Ovary (tissue), 10 donors: ENCODE measurements at regions of chr22 and their contacts with region 1.

Region 1: GRCh38 chr22:21712894-21713712 is 22.5 kb downstream of the YPEL1 start:
- DNase-seq: peak; percentile 65 to 71 (median 71)
- H3K4me3 ChIP-seq: no peak overlapping the region
- H3K27ac ChIP-seq: no peak overlapping the region
- H3K4me1 ChIP-seq: peaks cover 3% of the 10 kb centered on the region
- H3K27me3 ChIP-seq: no peaks in the 10 kb centered on the region
- CTCF ChIP-seq: peak; percentile 56 to 83 (median 77)
- EP300 ChIP-seq: no peak
- POLR2A ChIP-seq: no peak

Region 2: DNA sequence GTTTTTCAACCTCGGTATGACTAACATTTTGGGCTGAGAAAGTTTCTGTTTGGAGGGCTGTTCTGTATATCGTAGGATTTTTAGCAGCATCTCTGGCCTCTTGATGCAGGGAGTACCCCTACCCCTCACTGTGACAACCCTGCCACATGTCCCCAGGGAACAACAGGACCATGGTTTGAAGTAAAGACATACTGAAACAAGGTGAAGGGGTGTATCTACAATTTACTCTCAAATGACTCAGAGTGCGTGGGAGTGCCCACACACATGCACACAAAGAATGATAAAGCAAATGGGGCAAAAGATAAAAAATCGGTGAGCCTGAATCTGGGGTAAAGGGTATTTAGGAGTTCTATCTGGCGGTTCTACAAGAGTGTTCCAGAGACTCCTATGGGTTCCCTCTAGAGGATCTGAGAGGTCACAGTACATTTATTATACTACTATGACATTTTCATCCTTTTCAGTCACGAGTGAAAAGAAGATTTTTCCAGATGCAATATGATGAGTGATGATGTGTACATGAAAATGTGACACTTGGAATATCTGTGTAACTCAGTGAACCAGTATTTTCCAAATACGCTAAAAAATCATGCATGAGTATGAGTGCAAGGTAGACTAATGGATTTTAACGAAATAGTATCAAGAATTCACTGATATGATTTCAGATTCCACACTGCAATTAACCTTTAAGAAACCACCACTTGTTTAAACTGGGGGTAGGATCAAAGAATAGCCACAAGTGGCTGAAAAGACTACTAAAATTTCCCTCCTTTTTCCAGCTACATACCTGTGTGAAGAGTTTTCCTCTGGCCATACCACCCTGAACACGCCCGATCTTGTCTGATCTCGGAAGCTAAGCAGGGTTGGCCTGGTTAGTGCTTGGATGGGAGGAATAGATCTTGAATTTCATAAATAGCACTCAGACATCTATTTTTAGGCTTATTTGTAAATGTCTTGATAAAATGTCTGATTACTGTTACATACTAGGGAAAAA is 78.8 kb after region 1 on chr22:
- intact Hi-C with region 1: loop called in 1 of 4 experiments (anchors 10 kb)
- DNase-seq: no peak
- H3K4me3 ChIP-seq: no peak overlapping the region
- H3K27ac ChIP-seq: no peak overlapping the region
- H3K4me1 ChIP-seq: no peaks in the 10 kb centered on the region
- H3K27me3 ChIP-seq: no peaks in the 10 kb centered on the region
- CTCF ChIP-seq: no peak
- EP300 ChIP-seq: no peak
- POLR2A ChIP-seq: no peak

Region 3: GRCh38 chr22:21832291-21833290 is 119.5 kb after region 1 on chr22:
- intact Hi-C with region 1: no loop called
- DNase-seq: no peak
- H3K4me3 ChIP-seq: no peak overlapping the region
- H3K27ac ChIP-seq: no peak overlapping the region
- H3K4me1 ChIP-seq: peaks cover 12% of the 10 kb centered on the region
- H3K27me3 ChIP-seq: no peaks in the 10 kb centered on the region
- CTCF ChIP-seq: no peak
- EP300 ChIP-seq: no peak
- POLR2A ChIP-seq: no peak

Region 4: GRCh38 chr22:21938071-21938822 is 225.1 kb after region 1 on chr22:
- intact Hi-C with region 1: loop called (anchors 2 to 5 kb)
- DNase-seq: peak; percentile 92 to 98 (median 95)
- H3K4me3 ChIP-seq: peak overlapping the region; percentile 79
- H3K27ac ChIP-seq: peak overlapping the region; percentile 91 to 92
- H3K4me1 ChIP-seq: peaks cover 21% of the 10 kb centered on the region
- H3K27me3 ChIP-seq: no peaks in the 10 kb centered on the region
- CTCF ChIP-seq: peak; percentile 99 to 100 (median 99)
- EP300 ChIP-seq: no peak
- POLR2A ChIP-seq: no peak

Region 5: DNA sequence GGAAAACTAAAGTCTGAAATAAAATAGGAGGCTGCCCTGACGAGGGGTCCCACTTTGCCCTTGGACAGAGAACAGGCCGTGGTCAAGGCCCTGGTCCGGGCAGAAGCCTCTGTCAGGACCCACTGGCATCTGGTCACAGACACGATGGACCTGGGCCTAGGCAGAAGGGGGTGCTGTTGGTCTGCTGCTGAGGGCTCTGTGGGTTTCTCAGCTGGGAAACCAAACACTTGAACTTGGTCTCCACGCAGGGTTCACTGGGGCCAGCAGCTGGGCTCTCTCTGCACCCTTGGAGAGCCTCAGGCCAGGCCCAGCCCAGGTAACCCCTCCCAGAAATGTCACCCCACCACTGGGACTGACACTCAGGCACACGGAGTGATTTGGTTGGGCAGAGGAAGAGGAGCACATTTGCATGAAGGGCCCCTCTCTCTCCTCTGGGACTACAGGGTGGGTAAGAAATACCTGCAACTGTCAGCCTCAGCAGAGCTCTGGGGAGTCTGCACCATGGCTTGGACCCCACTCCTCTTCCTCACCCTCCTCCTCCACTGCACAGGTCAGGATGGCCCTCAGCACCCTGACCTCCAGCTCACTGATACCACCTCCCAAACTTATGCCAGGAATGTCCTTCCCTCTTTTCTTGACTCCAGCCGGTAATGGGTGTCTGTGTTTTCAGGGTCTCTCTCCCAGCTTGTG is 317.5 kb after region 1 on chr22:
- intact Hi-C with region 1: no loop called
- DNase-seq: peak in 3 of 5 donors; percentile 26 to 49 (median 46)
- H3K4me3 ChIP-seq: no peak overlapping the region
- H3K27ac ChIP-seq: no peak overlapping the region
- H3K4me1 ChIP-seq: no peaks in the 10 kb centered on the region
- H3K27me3 ChIP-seq: no peaks in the 10 kb centered on the region
- CTCF ChIP-seq: no peak
- EP300 ChIP-seq: no peak
- POLR2A ChIP-seq: no peak

Region 6: GRCh38 chr22:22060200-22061084 is 347.3 kb after region 1 on chr22:
- intact Hi-C with region 1: loop called in 1 of 4 experiments (anchors 10 kb)
- DNase-seq: peak; percentile 26 to 79 (median 36)
- H3K4me3 ChIP-seq: no peak overlapping the region
- H3K27ac ChIP-seq: peak overlapping the region in 1 of 2 donors; percentile 56
- H3K4me1 ChIP-seq: no peaks in the 10 kb centered on the region
- H3K27me3 ChIP-seq: no peaks in the 10 kb centered on the region
- CTCF ChIP-seq: peak in 1 of 3 donors; percentile 25
- EP300 ChIP-seq: no peak
- POLR2A ChIP-seq: no peak